ENCODE measurements at regions of chr10 and their contacts with region 1.

Region 1: DNA sequence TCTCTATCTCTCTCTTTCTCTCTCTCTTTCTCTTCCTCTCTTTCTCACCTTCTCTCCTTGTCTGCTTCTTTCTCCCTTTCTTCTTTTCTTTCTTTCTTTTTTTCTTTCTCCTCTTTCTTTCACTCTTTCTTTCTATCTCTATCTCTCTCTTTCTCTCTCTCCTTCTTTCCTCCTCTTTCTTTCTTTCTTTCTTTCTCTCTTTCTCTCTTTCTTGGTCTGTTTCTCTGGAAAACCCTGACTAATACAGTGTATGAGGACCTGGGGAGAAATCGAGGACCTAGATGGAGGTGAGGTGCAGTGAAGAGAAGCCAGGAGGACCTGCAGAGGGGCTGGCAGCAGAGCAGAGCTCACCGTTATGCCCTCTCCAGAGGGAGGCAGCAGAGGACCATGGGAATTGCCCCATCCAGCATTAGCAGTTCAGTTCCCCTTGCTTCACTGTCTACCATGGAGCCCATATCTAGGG is 52.7 kb upstream of the BTRC start:
- DNase-seq: peak in 5 of 14 experiments; percentile 18 to 48 (median 36)
- ATAC-seq: peak; percentile 39
- H3K4me3 ChIP-seq: no peak overlapping the region
- H3K4me3 Mint-ChIP-seq: no peak overlapping the region
- H3K27ac ChIP-seq: no peak overlapping the region
- H3K27ac Mint-ChIP-seq: no peak overlapping the region
- H3K4me1 ChIP-seq: peaks cover 3% of the 10 kb centered on the region
- H3K4me1 Mint-ChIP-seq: no peaks in the 10 kb centered on the region
- H3K27me3 ChIP-seq: peaks cover 22 to 23% of the 10 kb centered on the region in 2 experiments
- H3K27me3 Mint-ChIP-seq: peaks cover 72% of the 10 kb centered on the region
- CTCF ChIP-seq: no peak

Region 2: DNA sequence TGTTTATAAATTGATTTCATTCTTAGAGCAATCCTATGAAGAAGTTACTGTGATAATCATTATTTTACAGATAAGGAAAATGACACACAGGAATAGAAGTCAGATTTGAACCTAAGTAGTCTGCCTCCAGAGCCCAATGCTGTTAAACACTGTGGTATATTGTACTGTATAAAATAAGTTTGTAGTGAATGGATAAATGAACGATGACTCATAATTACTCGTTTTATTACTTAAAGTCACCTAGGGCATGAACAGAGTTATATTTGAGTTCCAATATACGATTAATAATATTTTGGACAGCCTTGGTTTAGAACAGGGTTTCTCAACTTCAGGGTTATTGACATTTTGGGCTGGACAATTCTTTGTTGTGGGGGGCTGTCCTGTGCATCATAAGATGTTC is 44.9 kb after region 1 on chr10:
- CTCF ChIA-PET with region 1: no interaction called
- POLR2A ChIA-PET with region 1: no interaction called
- intact Hi-C with region 1: loop called in 1 of 2 experiments (anchors 1 kb)
- DNase-seq: no peak
- ATAC-seq: no peak
- H3K4me3 ChIP-seq: no peak overlapping the region
- H3K4me3 Mint-ChIP-seq: no peak overlapping the region
- H3K27ac ChIP-seq: no peak overlapping the region
- H3K27ac Mint-ChIP-seq: no peak overlapping the region
- H3K4me1 ChIP-seq: no peaks in the 10 kb centered on the region
- H3K4me1 Mint-ChIP-seq: no peaks in the 10 kb centered on the region
- H3K27me3 ChIP-seq: peaks cover 0 to 5% of the 10 kb centered on the region in 2 experiments
- H3K27me3 Mint-ChIP-seq: peaks cover 11% of the 10 kb centered on the region
- CTCF ChIP-seq: no peak

Region 3: GRCh38 chr10:101467286-101467770 is 166.0 kb after region 1 on chr10:
- CTCF ChIA-PET with region 1: interaction called, 6 read pairs
- POLR2A ChIA-PET with region 1: interaction called, 4 read pairs
- intact Hi-C with region 1: loop called in 1 of 2 experiments (anchors 10 kb)
- DNase-seq: peak in 6 of 14 experiments; percentile 7 to 75 (median 41)
- ATAC-seq: peak; percentile 89
- H3K4me3 ChIP-seq: no peak overlapping the region
- H3K4me3 Mint-ChIP-seq: no peak overlapping the region
- H3K27ac ChIP-seq: no peak overlapping the region
- H3K27ac Mint-ChIP-seq: no peak overlapping the region
- H3K4me1 ChIP-seq: no peaks in the 10 kb centered on the region
- H3K4me1 Mint-ChIP-seq: peaks cover 17% of the 10 kb centered on the region
- H3K27me3 ChIP-seq: no peaks in the 10 kb centered on the region
- H3K27me3 Mint-ChIP-seq: no peaks in the 10 kb centered on the region
- CTCF ChIP-seq: peak; percentile 80